Activated naive CD4-positive, alpha-beta T cell treated with anti-CD3 and anti-CD28 coated beads for 36 hours (primary cell): ENCODE measurements at regions of chr19 and their contacts with region 1.

Region 1: GRCh38 chr19:58278157-58279041 is at the start of gene ZNF8:
- DNase-seq: peak; percentile 99
- H3K4me3 Mint-ChIP-seq: peak within 1 kb of the TSS; percentile 88
- H3K27ac Mint-ChIP-seq: peak within 1 kb of the TSS; percentile 93
- H3K4me1 Mint-ChIP-seq: peaks cover 25% of the 10 kb centered on the region
- H3K27me3 Mint-ChIP-seq: no peaks in the 10 kb centered on the region
- total RNA-seq, gene ZNF8: 3.2 to 3.6 TPM

Region 2: DNA sequence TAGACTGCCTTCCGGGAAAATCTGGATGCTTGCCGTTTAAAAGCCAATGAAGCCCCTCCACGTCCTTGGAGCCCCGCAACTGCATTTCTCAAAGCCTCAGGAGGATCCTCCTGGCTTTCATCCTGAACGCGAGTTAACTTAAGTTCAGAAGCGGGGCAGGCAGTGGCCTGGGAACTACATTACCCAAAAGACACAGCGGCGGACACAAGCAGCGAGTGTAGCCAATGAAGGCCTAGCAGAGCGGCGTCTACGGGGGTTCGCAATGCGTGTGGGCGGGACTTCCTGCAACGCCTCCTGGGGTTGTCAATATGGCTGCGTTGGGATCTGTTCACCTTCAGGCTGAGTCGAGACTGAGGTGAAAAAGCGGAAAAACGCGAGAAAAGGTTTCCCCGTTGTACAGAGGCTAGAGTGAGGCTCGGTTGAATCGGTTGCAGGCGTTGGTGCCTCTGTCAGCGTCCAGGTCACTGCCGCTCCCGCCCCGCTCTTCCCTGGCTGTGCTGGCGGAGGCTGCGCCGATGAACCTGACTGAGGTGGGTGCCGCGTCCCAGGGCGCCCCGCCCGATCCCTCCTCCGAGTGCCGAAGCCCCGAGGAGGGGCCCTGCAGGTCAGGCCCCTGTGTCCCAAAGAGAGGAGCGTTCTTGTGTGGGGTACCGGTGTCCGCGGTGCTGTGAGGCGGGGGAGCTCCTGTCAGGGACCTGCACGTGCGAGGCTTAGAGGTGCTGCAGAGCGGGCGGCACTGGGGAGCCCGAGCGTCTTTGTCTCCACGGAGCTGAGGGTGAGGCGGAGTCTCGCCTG is 867.3 kb before region 1 on chr19 and contains the start of gene ZNF17:
- CTCF ChIA-PET with region 1: no interaction called
- intact Hi-C with region 1: loop called (anchors 5 kb)
- DNase-seq: peak; percentile 96
- H3K4me3 Mint-ChIP-seq: peak within 1 kb of the TSS; percentile 92
- H3K27ac Mint-ChIP-seq: peak within 1 kb of the TSS; percentile 56
- H3K4me1 Mint-ChIP-seq: peaks cover 19% of the 10 kb centered on the region
- H3K27me3 Mint-ChIP-seq: no peaks in the 10 kb centered on the region
- total RNA-seq, gene ZNF17: 4.6 to 6.3 TPM

Region 3: GRCh38 chr19:58002384-58003173 is 275.8 kb before region 1 on chr19 and contains the start of gene ZNF606:
- CTCF ChIA-PET with region 1: no interaction called
- intact Hi-C with region 1: loop called (anchors 1 kb)
- DNase-seq: peak; percentile 86
- H3K4me3 Mint-ChIP-seq: peak within 1 kb of the TSS; percentile 81
- H3K27ac Mint-ChIP-seq: peak within 1 kb of the TSS; percentile 79
- H3K4me1 Mint-ChIP-seq: peaks cover 29% of the 10 kb centered on the region
- H3K27me3 Mint-ChIP-seq: no peaks in the 10 kb centered on the region
- total RNA-seq, gene ZNF606: 4.5 to 4.7 TPM

Region 4: DNA sequence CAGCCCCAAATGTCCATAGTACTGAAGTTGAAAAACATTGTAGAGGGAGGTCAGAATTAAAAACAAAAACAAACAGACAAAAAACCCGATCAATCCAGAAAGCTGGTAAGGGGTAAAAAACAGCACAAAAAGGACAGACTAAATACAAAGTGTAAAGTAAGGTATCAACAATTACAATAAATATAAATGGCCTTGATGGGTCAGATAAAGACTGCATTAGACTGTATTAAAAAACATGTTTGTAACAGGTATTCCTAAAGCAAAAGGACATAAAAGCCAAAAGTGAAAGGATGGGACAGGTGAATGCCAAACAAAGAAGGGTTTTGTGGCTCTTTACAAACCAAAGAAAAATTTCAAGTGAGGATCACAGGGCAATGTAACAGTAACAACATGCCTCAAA is 144.2 kb before region 1 on chr19:
- CTCF ChIA-PET with region 1: no interaction called
- intact Hi-C with region 1: no loop called
- DNase-seq: no peak
- H3K4me3 Mint-ChIP-seq: no peak overlapping the region
- H3K27ac Mint-ChIP-seq: no peak overlapping the region
- H3K4me1 Mint-ChIP-seq: no peaks in the 10 kb centered on the region
- H3K27me3 Mint-ChIP-seq: no peaks in the 10 kb centered on the region

Region 5: GRCh38 chr19:58305065-58305931 is 26.9 kb after region 1 on chr19 and contains the start of gene ERVK3-1:
- CTCF ChIA-PET with region 1: no interaction called
- intact Hi-C with region 1: loop called (anchors 1 kb)
- DNase-seq: peak; percentile 95
- H3K4me3 Mint-ChIP-seq: peak within 1 kb of the TSS; percentile 100
- H3K27ac Mint-ChIP-seq: peak within 1 kb of the TSS; percentile 99
- H3K4me1 Mint-ChIP-seq: peaks cover 46% of the 10 kb centered on the region
- H3K27me3 Mint-ChIP-seq: no peaks in the 10 kb centered on the region
- total RNA-seq, gene ERVK3-1: 24.5 to 27.7 TPM

Region 6: GRCh38 chr19:58362272-58362994 is 84.0 kb after region 1 on chr19 and contains the start of gene ZNF497:
- CTCF ChIA-PET with region 1: no interaction called
- intact Hi-C with region 1: loop called (anchors 1 kb)
- DNase-seq: peak; percentile 97
- H3K4me3 Mint-ChIP-seq: peak within 1 kb of the TSS; percentile 93
- H3K27ac Mint-ChIP-seq: peak within 1 kb of the TSS; percentile 87
- H3K4me1 Mint-ChIP-seq: peaks cover 8% of the 10 kb centered on the region
- H3K27me3 Mint-ChIP-seq: no peaks in the 10 kb centered on the region
- total RNA-seq, gene ZNF497: 0.40 to 0.41 TPM

Region 7: GRCh38 chr19:58408152-58409009 is 130.0 kb after region 1 on chr19 and contains the start of gene ZNF584:
- CTCF ChIA-PET with region 1: no interaction called
- intact Hi-C with region 1: loop called (anchors 1 kb)
- DNase-seq: peak; percentile 97
- H3K4me3 Mint-ChIP-seq: peak within 1 kb of the TSS; percentile 89
- H3K27ac Mint-ChIP-seq: peak within 1 kb of the TSS; percentile 93
- H3K4me1 Mint-ChIP-seq: peaks cover 30% of the 10 kb centered on the region
- H3K27me3 Mint-ChIP-seq: no peaks in the 10 kb centered on the region
- total RNA-seq, gene ZNF584: 3.4 to 4.8 TPM

Region 8: GRCh38 chr19:58519355-58520256 is 241.2 kb after region 1 on chr19 and contains the start of gene ZBTB45:
- CTCF ChIA-PET with region 1: no interaction called
- intact Hi-C with region 1: loop called (anchors 1 kb)
- DNase-seq: peak; percentile 94
- H3K4me3 Mint-ChIP-seq: peak within 1 kb of the TSS; percentile 93
- H3K27ac Mint-ChIP-seq: peak within 1 kb of the TSS; percentile 98
- H3K4me1 Mint-ChIP-seq: peaks cover 38% of the 10 kb centered on the region
- H3K27me3 Mint-ChIP-seq: no peaks in the 10 kb centered on the region
- total RNA-seq, gene ZBTB45: 5.5 to 6.0 TPM